GM12878 (cell line): ENCODE measurements at regions of chr4 and their contacts with region 1.

Region 1: GRCh38 chr4:185232370-185232769 is 23.0 kb downstream of the SNX25 start:
- DNase-seq: no peak
- ATAC-seq: no peak
- H3K4me3 ChIP-seq: no peak overlapping the region
- H3K27ac ChIP-seq: no peak overlapping the region
- H3K4me1 ChIP-seq: no peaks in the 10 kb centered on the region; the same call in 1 of the 2 replicates
- H3K27me3 ChIP-seq: no peaks in the 10 kb centered on the region
- CTCF ChIP-seq: no peak
- EP300 ChIP-seq: no peak
- POLR2A ChIP-seq: no peak
- RAD21 ChIP-seq: no peak

Region 2: DNA sequence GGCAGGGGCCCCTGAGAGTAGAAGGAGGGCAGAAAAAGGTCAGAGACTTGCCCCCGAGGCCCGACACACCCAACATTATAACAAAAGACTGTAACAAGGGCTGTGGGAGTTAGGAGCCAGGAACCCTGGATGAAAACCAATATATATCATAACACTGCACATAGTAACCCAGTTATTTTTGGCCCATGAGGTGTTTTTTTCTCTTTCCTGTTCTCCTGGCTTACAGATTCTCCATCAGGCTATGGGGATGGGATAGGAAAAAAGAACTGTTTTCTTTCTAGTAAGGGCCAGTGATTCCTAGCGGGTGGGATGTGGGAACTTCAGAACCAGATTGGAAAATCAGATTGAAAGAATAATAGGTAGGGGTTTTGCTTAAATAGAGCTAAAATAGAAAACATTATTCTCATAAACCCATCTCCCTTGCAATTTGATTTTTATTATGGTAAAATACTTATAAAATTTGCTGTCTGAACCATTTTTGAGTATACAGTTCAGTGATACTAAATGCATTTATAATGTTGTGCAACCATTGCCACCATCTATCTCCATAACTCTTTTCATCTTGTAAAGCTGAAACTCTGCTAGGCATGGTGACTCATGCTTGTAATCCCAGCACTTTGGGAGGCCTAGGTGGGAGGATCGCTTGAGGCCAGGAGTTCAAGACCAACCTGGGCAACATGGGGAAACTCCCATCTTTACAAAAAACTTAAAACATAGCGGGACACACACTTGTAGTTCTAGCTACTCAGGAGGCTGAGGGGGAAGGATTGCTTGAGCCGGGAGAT is 10.6 kb after region 1 on chr4:
- CTCF ChIA-PET with region 1: interaction called, 5 read pairs
- POLR2A ChIA-PET with region 1: interaction called, 5 read pairs
- RAD21 ChIA-PET with region 1: no interaction called
- SMC1A ChIA-PET with region 1: interaction called, 14 read pairs
- in situ Hi-C with region 1: no loop called
- intact Hi-C with region 1: no loop called
- DNase-seq: no peak
- ATAC-seq: no peak
- H3K4me3 ChIP-seq: no peak overlapping the region
- H3K27ac ChIP-seq: no peak overlapping the region
- H3K4me1 ChIP-seq: peaks cover 5% of the 10 kb centered on the region
- H3K27me3 ChIP-seq: no peaks in the 10 kb centered on the region
- CTCF ChIP-seq: no peak
- EP300 ChIP-seq: no peak
- POLR2A ChIP-seq: no peak
- RAD21 ChIP-seq: no peak